ENCODE measurements at regions of chr5 and their contacts with region 1.

Region 1: GRCh38 chr5:96702503-96703383 is 40.6 kb downstream of the CAST start:
- DNase-seq: peak; percentile 76 to 88 (median 80)
- H3K4me3 ChIP-seq: peak overlapping the region; percentile 67
- H3K4me3 Mint-ChIP-seq: peak overlapping the region; percentile 81 to 96 (median 92)
- H3K27ac ChIP-seq: peak overlapping the region; percentile 93
- H3K27ac Mint-ChIP-seq: peak overlapping the region; percentile 86 to 99 (median 98)
- H3K4me1 ChIP-seq: peaks cover 23% of the 10 kb centered on the region
- H3K4me1 Mint-ChIP-seq: peaks cover 30 to 69% (median 46%) of the 10 kb centered on the region in 3 donors
- H3K27me3 ChIP-seq: no peaks in the 10 kb centered on the region
- H3K27me3 Mint-ChIP-seq: no peaks in the 10 kb centered on the region

Region 2: GRCh38 chr5:96662725-96663513 is 39.8 kb before region 1 on chr5:
- CTCF ChIA-PET with region 1: interaction called, 5 read pairs
- POLR2A ChIA-PET with region 1: interaction called, 20 read pairs
- DNase-seq: peak; percentile 80 to 90 (median 84)
- H3K4me3 ChIP-seq: peak overlapping the region; percentile 80
- H3K4me3 Mint-ChIP-seq: peak overlapping the region; percentile 91 to 99 (median 98)
- H3K27ac ChIP-seq: peak overlapping the region; percentile 92
- H3K27ac Mint-ChIP-seq: peak overlapping the region; percentile 97 to 99 (median 98)
- H3K4me1 ChIP-seq: peaks cover 33% of the 10 kb centered on the region
- H3K4me1 Mint-ChIP-seq: peaks cover 55 to 71% (median 67%) of the 10 kb centered on the region in 3 donors
- H3K27me3 ChIP-seq: no peaks in the 10 kb centered on the region
- H3K27me3 Mint-ChIP-seq: no peaks in the 10 kb centered on the region

Region 3: DNA sequence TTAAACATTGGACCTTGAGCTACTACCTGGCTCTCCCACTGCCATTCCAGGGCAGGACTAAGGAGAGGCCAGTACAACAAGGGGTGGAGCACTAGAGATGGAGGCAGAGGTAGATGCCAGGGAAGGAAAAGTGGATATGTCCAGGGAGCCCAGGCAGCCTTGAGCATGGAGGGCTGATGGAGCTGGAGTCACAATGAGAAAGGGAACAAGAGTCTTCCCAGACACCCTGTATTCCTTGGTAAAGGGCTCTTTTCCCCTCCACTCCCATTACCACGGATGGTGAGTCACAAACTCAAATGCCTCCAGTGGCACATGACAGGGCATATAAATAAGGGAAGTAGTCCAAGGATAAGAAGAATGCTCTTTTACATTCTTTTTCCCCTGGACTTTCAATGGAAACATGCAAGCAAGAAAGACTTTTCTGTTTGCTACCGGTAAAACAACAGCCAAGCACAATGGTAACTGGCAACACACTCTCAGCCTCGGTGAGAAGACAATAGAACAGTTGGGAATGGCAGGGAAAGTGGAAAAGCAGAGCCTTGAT is 88.3 kb after region 1 on chr5:
- CTCF ChIA-PET with region 1: no interaction called
- POLR2A ChIA-PET with region 1: no interaction called
- DNase-seq: no peak
- H3K4me3 ChIP-seq: no peak overlapping the region
- H3K4me3 Mint-ChIP-seq: no peak overlapping the region
- H3K27ac ChIP-seq: no peak overlapping the region
- H3K27ac Mint-ChIP-seq: peak overlapping the region; percentile 21 to 88 (median 68)
- H3K4me1 ChIP-seq: peaks cover 17% of the 10 kb centered on the region
- H3K4me1 Mint-ChIP-seq: peaks cover 30 to 43% (median 41%) of the 10 kb centered on the region in 3 donors
- H3K27me3 ChIP-seq: no peaks in the 10 kb centered on the region
- H3K27me3 Mint-ChIP-seq: no peaks in the 10 kb centered on the region